IMR-90 (cell line): ENCODE measurements at regions of chr5 and their contacts with region 1.

Region 1: DNA sequence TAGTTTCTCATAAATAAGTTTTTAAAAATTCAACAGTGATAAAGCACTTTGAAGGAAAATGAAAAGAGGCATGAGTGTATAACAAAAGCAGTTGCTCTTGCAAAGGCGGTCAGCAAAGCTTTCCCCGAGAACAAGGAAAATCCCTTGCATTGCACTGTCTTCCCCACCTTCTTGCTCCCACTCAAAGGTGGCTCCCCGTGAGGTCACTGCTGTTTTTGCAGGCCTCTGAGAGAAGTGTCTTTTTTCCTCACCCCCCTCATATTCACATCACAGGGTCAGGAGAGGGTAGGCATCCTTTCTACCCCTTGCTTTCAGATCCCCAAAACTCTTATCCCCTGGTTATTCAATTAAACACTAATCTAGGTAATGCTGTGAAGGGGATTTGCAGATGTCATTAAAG is 15.2 kb upstream of the SLC36A1 start:
- DNase-seq: no peak
- ATAC-seq: no peak
- H3K4me3 ChIP-seq: no peak overlapping the region
- H3K27ac ChIP-seq: no peak overlapping the region
- H3K4me1 ChIP-seq: no peaks in the 10 kb centered on the region
- H3K27me3 ChIP-seq: peaks cover 11% of the 10 kb centered on the region
- CTCF ChIP-seq: no peak
- POLR2A ChIP-seq: no peak
- RAD21 ChIP-seq: no peak

Region 2: GRCh38 chr5:151628112-151628823 is 196.1 kb after region 1 on chr5:
- CTCF ChIA-PET with region 1: no interaction called
- POLR2A ChIA-PET with region 1: no interaction called
- dilution Hi-C with region 1: no loop called
- in situ Hi-C with region 1: loop called (anchors 10 kb)
- intact Hi-C with region 1: no loop called
- DNase-seq: no peak
- ATAC-seq: peak; percentile 18; the same call in 1 of the 2 replicates
- H3K4me3 ChIP-seq: no peak overlapping the region
- H3K27ac ChIP-seq: no peak overlapping the region
- H3K4me1 ChIP-seq: no peaks in the 10 kb centered on the region
- H3K27me3 ChIP-seq: peaks cover 8% of the 10 kb centered on the region
- CTCF ChIP-seq: no peak
- POLR2A ChIP-seq: no peak
- RAD21 ChIP-seq: no peak

Region 3: DNA sequence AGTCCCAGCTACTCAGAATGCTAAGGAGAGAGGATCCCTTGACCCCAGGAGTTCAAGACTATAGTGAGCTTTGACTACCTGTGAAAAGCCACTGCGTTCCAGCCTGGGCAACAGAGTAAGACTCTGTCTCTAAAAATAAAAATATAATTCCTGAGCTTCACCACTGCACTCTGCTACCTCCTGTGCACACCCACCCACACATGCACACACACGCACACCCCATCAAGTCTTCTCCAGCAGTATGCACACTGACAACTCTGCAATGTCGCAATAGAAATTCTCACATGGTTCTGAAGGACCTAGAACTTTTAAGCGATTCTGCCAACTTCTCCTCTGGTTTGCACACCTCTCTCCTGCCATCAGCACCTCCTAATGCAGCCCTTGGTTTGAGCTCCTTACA is 206.4 kb after region 1 on chr5:
- CTCF ChIA-PET with region 1: no interaction called
- POLR2A ChIA-PET with region 1: no interaction called
- dilution Hi-C with region 1: no loop called
- in situ Hi-C with region 1: no loop called
- intact Hi-C with region 1: no loop called
- DNase-seq: no peak
- ATAC-seq: no peak
- H3K4me3 ChIP-seq: no peak overlapping the region
- H3K27ac ChIP-seq: no peak overlapping the region
- H3K4me1 ChIP-seq: no peaks in the 10 kb centered on the region
- H3K27me3 ChIP-seq: peaks cover 35% of the 10 kb centered on the region
- CTCF ChIP-seq: no peak
- POLR2A ChIP-seq: no peak
- RAD21 ChIP-seq: no peak